MCF 10A (cell line): ENCODE measurements at regions of chr1 and their contacts with region 1.

Region 1: GRCh38 chr1:221886743-221887413 is 145.0 kb upstream of the DUSP10 start:
- DNase-seq: peak; percentile 99
- H3K4me3 Mint-ChIP-seq: peak overlapping the region; percentile 55
- H3K27ac Mint-ChIP-seq: peak overlapping the region; percentile 85
- H3K4me1 Mint-ChIP-seq: peaks cover 60% of the 10 kb centered on the region
- H3K27me3 Mint-ChIP-seq: no peaks in the 10 kb centered on the region
- CTCF ChIP-seq: peak; percentile 11

Region 2: GRCh38 chr1:221543529-221544120 is 343.3 kb before region 1 on chr1:
- CTCF ChIA-PET with region 1: interaction called, 10 read pairs
- POLR2A ChIA-PET with region 1: interaction called, 5 read pairs
- intact Hi-C with region 1: loop called (anchors 5 kb)
- DNase-seq: peak; percentile 56
- H3K4me3 Mint-ChIP-seq: no peak overlapping the region
- H3K27ac Mint-ChIP-seq: peak overlapping the region; percentile 44
- H3K4me1 Mint-ChIP-seq: peaks cover 15% of the 10 kb centered on the region
- H3K27me3 Mint-ChIP-seq: no peaks in the 10 kb centered on the region
- CTCF ChIP-seq: peak; percentile 86

Region 3: GRCh38 chr1:221839796-221840395 is 47.0 kb before region 1 on chr1:
- CTCF ChIA-PET with region 1: interaction called, 11 read pairs
- POLR2A ChIA-PET with region 1: interaction called, 38 read pairs
- intact Hi-C with region 1: loop called (anchors 1 kb)
- DNase-seq: peak; percentile 100
- H3K4me3 Mint-ChIP-seq: no peak overlapping the region
- H3K27ac Mint-ChIP-seq: peak overlapping the region; percentile 94
- H3K4me1 Mint-ChIP-seq: peaks cover 63% of the 10 kb centered on the region
- H3K27me3 Mint-ChIP-seq: no peaks in the 10 kb centered on the region
- CTCF ChIP-seq: no peak

Region 4: DNA sequence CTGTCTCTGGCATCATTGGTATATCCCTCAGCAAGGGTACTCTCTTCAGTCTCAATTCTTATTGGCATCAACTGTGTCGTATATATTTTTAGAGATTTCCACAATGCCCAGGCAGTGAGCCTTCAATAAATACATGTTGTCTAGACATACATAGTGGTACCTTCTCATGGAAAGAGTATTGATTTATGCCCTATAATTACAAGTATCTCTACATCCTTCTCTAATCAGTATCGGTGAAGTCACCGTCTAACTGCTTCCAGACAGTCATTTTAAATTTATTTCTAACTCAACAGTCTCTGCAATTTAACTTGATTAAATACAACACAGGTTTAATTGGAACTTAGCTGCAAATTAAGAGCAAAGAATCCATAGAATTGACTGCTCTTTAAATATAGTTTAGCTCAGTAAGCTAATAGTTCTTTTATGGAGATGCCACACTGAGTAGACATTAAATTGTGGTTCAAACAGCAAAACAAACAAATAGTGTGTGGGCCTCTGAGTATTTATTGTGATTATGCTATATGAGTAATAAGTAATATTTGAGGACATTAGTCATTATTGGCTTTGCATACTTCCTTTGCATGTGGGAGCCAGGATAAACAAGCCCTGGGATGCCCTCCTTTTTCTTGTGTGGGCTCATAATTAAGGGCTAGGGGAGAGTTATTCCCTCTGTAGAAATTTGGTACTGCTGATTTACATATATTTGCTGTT is 18.1 kb before region 1 on chr1:
- CTCF ChIA-PET with region 1: interaction called, 29 read pairs
- POLR2A ChIA-PET with region 1: interaction called, 47 read pairs
- intact Hi-C with region 1: no loop called
- DNase-seq: peak; percentile 83
- H3K4me3 Mint-ChIP-seq: no peak overlapping the region
- H3K27ac Mint-ChIP-seq: peak overlapping the region; percentile 26
- H3K4me1 Mint-ChIP-seq: peaks cover 25% of the 10 kb centered on the region
- H3K27me3 Mint-ChIP-seq: no peaks in the 10 kb centered on the region
- CTCF ChIP-seq: no peak

Region 5: GRCh38 chr1:221994274-221994698 is 107.4 kb after region 1 on chr1:
- CTCF ChIA-PET with region 1: interaction called, 4 read pairs
- POLR2A ChIA-PET with region 1: interaction called, 7 read pairs
- intact Hi-C with region 1: loop called (anchors 5 kb)
- DNase-seq: no peak
- H3K4me3 Mint-ChIP-seq: no peak overlapping the region
- H3K27ac Mint-ChIP-seq: no peak overlapping the region
- H3K4me1 Mint-ChIP-seq: peaks cover 44% of the 10 kb centered on the region
- H3K27me3 Mint-ChIP-seq: no peaks in the 10 kb centered on the region
- CTCF ChIP-seq: no peak